ENCODE measurements at regions of chr3 and their contacts with region 1.

Region 1: DNA sequence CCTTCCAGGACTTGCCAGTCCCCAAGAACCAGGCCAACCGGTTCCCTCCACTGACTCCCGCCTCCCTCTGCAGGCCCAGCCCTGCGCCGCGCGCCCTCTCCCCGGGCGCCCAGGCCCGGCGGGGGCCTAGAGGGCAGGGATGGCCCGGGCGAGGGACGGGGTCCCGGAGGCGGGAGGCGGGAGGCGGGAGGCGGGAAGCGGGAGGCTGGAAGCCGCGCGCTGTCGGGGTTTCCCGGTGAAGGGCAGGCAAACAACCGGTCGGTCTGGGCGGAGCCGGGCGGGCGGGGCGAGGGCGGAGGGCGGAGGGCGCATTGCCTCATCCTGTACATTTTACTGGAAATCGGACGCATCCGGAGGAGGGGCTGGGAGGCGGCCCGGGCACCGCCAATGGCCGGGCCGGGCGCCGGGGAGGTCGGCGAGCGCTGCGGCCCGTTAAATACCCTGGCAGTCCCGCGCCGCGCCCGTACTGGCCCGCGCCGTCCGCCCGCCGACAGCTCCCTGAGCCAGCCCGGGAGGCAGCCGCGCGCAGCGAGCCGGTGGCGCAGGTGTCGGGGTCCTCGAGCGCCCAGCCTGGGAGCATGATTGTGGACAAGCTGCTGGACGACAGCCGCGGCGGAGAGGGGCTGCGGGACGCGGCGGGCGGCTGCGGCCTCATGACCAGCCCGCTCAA is at the start of gene NFKBIZ:
- DNase-seq: peak; percentile 95 to 97 (median 97)
- H3K4me3 ChIP-seq: peak within 1 kb of the TSS; percentile 76
- H3K27ac ChIP-seq: peak within 1 kb of the TSS; percentile 98 to 99
- H3K4me1 ChIP-seq: peaks cover 4% of the 10 kb centered on the region
- H3K27me3 ChIP-seq: no peaks in the 10 kb centered on the region
- CTCF ChIP-seq: no peak
- EP300 ChIP-seq: peak; percentile 87
- POLR2A ChIP-seq: peak; percentile 98
- total RNA-seq, gene NFKBIZ: 29.2 to 194 (median 45.5) TPM

Region 2: GRCh38 chr3:101685870-101686412 is 163.2 kb before region 1 on chr3:
- intact Hi-C with region 1: loop called in 1 of 4 experiments (anchors 5 kb)
- DNase-seq: no peak
- H3K4me3 ChIP-seq: peak overlapping the region; percentile 59
- H3K27ac ChIP-seq: peak overlapping the region; percentile 83 to 86
- H3K4me1 ChIP-seq: peaks cover 10% of the 10 kb centered on the region
- H3K27me3 ChIP-seq: no peaks in the 10 kb centered on the region
- CTCF ChIP-seq: no peak
- EP300 ChIP-seq: no peak
- POLR2A ChIP-seq: no peak

Region 3: GRCh38 chr3:102057781-102058421 is 208.7 kb after region 1 on chr3:
- intact Hi-C with region 1: no loop called
- DNase-seq: no peak
- H3K4me3 ChIP-seq: no peak overlapping the region
- H3K27ac ChIP-seq: no peak overlapping the region
- H3K4me1 ChIP-seq: peaks cover 2% of the 10 kb centered on the region
- H3K27me3 ChIP-seq: no peaks in the 10 kb centered on the region
- CTCF ChIP-seq: no peak
- EP300 ChIP-seq: no peak
- POLR2A ChIP-seq: no peak

Region 4: DNA sequence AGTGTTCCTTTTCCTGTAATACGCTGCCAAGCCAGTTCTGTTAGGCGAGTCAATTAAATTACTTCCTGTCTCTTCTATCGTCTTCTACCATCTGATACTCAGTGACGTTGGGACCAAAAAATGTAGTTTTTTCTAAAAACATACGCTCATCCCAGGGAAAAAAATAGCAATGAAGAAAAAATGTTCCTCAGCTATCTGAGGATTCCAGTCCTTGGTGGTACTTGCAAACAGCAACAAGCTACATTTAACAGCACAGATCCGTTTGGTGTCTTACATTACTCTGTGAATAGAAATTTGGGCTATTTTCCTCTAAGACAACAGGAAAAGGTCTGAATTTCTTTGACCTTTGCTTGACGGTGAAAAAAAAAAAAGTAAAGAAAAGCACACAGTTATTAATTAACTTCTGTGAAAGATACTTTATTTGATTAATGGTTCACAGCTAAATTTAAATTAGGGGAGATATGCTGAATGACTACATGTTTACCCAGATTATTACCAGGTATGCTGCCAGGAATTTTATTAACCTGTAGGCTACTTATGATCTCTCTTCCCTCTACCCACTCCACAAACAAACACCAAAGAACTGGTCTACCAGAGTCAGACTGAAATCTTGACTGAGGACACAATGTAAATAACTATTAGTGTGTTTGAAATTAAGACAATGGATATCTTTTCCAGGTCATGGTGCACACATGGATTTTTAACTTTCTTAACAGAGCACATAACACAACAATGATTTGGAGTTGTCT is 331.3 kb after region 1 on chr3:
- intact Hi-C with region 1: loop called in 1 of 4 experiments (anchors 5 kb)
- DNase-seq: no peak
- H3K4me3 ChIP-seq: no peak overlapping the region
- H3K27ac ChIP-seq: no peak overlapping the region
- H3K4me1 ChIP-seq: peaks cover 2% of the 10 kb centered on the region
- H3K27me3 ChIP-seq: no peaks in the 10 kb centered on the region
- CTCF ChIP-seq: no peak
- EP300 ChIP-seq: no peak
- POLR2A ChIP-seq: no peak